ENCODE measurements at regions of chr12 and their contacts with region 1.

Region 1: GRCh38 chr12:117587631-117588287 is 226.3 kb upstream of the NOS1 start:
- DNase-seq: peak in 1 of 2 donors; percentile 60
- ATAC-seq: peak; percentile 72
- H3K4me3 ChIP-seq: no peak overlapping the region
- H3K27ac ChIP-seq: no peak overlapping the region
- H3K4me1 ChIP-seq: no peaks in the 10 kb centered on the region
- H3K27me3 ChIP-seq: no peaks in the 10 kb centered on the region

Region 2: DNA sequence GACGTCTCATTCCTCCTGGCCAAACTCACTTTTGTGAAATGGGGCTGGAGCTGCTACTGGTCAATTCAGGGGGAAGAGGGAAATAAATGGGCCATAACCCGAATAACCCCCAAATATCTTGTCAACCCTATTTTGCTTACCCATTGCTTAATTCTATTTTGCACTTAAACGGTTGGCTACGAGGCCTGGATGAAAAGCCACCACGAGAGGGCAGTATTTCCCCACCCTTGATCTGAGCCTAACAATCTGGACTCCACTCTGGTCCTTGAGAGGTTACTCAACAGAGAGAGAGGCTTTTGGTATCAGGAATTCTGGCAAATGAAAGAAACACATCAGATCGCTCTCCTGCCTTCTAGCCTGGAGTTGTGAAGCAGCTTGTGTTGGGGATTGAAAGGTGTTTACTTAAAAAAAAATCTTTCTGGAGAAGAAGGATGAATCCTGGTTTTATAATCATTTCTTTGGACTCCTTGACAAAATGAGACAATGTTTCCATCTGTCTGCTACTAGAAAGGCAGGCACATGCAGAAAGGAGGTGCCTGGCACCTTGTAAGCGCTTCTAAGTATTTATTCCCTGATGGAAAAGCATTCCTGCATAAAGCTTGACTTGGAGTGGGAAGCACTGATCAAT is 375.1 kb before region 1 on chr12:
- intact Hi-C with region 1: loop called in 1 of 2 experiments (anchors 5 kb)
- DNase-seq: peak; percentile 71 to 81
- ATAC-seq: peak; percentile 86
- H3K4me3 ChIP-seq: no peak overlapping the region
- H3K27ac ChIP-seq: no peak overlapping the region
- H3K4me1 ChIP-seq: no peaks in the 10 kb centered on the region
- H3K27me3 ChIP-seq: no peaks in the 10 kb centered on the region

Region 3: GRCh38 chr12:117367011-117367638 is 220.6 kb before region 1 on chr12:
- intact Hi-C with region 1: loop called (anchors 2 to 5 kb)
- DNase-seq: peak in 1 of 2 donors; percentile 54
- ATAC-seq: no peak
- H3K4me3 ChIP-seq: no peak overlapping the region
- H3K27ac ChIP-seq: no peak overlapping the region
- H3K4me1 ChIP-seq: no peaks in the 10 kb centered on the region
- H3K27me3 ChIP-seq: no peaks in the 10 kb centered on the region

Measured in aorta (tissue), 5 donors.